A549 (cell line): ENCODE measurements at regions of chr16 and their contacts with region 1.

Region 1: DNA sequence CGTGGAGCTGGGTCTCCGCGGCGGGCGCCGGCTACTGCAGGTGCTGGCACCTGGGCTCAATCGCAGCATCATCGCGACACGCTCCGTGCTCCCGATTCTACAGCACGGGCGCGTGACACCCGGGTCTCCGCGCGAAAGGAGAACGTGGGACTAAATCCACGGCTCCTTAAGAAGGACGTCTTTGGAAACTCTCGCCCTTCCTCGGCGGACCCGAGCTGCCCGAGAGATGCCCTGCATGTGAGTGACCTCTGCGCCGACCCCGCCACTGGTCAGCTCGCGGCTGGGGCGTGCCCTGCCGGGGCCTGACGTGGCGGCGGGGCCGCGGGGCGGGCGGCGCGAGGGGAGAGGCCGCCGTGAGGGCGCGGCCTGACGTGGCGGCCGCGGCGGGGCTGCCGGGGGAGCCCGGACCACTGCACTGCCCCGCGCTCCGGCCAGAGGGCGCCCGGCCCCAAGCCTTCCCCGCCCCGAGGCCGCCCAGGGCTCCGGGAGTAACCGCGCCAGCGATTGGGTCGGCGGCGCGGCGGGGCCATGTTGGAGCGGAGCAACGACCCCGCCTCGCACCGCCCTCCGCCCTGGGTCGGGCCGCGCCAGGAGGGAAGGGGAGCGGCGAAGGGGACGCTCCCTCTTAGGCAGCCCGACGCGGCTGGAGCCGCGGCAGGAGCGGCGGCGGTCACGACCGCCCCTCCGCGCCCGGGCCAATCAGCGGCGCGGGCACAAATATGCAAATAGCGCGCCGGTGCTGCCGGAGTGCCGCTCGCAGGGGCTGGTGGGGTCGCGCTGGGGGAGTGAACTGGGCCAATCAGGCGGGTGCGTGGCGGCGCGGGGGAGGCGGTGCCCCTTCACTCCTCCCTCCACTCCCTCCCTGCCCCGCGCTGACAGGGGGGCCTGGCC is 75.6 kb downstream of the CHD9 start:
- DNase-seq: peak; percentile 94 to 96
- ATAC-seq: peak; percentile 87 to 94
- H3K4me3 ChIP-seq: peak overlapping the region; percentile 96
- H3K27ac ChIP-seq: peak overlapping the region; percentile 94 to 96
- H3K4me1 ChIP-seq: peaks cover 29% of the 10 kb centered on the region
- CTCF ChIP-seq: peak; percentile 83
- EP300 ChIP-seq: no peak
- POLR2A ChIP-seq: peak; percentile 72
- RAD21 ChIP-seq: peak; percentile 57 to 83

Region 2: GRCh38 chr16:53080345-53081031 is 49.9 kb before region 1 on chr16:
- CTCF ChIA-PET with region 1: no interaction called
- POLR2A ChIA-PET with region 1: interaction called, 14 read pairs
- DNase-seq: peak; percentile 89 to 92
- ATAC-seq: peak; percentile 95 to 96
- H3K4me3 ChIP-seq: peak overlapping the region; percentile 3; the same call in 2 of the 3 replicates
- H3K27ac ChIP-seq: peak overlapping the region; percentile 75 to 87
- H3K4me1 ChIP-seq: peaks cover 75% of the 10 kb centered on the region
- CTCF ChIP-seq: no peak
- EP300 ChIP-seq: peak; percentile 58 to 70; a peak in 3 of 5 replicates
- POLR2A ChIP-seq: no peak
- RAD21 ChIP-seq: peak in 1 of 2 experiments; percentile 39; a peak in 3 of 5 replicates

Region 3: DNA sequence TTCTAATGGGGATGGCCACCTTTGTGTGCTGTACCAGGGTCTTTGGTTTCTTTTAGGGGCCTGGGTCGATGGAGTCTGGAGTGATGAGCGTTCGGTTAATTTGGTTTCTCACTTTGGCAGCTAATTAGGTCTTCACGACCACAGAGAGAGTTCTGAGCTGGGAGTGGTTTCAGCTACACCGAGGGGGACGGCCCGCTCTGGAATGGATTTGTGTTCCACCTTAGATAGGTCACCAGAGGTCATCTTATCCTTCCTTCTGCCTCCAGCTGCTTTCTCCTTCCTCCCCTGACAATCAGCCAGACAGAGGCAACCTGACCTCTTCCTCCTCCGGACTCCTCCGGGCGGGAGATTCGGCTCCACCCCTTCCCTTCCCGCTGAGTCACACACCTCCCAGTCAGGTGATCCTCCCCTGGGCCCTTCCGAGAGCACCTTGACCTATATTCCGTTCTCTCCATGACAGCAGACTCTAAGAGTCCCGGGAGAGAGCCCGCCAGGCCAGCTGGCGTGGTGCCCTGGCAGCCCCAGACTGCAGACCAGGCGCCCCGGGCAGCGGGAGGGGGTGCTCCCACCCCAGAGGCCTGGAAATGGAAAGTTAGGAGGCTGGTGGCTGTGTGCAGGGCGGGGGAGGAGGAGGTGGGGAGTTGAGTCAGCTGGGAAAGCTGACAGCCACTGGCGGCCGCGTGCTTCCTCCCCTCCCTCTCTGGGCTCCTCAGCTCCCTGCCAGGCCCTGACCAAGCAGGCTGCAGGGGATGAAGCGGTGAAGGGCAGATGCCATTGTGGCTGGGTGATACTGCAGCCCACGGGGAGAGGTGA is 30.9 kb before region 1 on chr16:
- CTCF ChIA-PET with region 1: interaction called, 7 read pairs
- POLR2A ChIA-PET with region 1: interaction called, 18 read pairs
- DNase-seq: peak; percentile 86 to 95
- ATAC-seq: peak; percentile 92 to 94
- H3K4me3 ChIP-seq: peak overlapping the region; percentile 31
- H3K27ac ChIP-seq: peak overlapping the region; percentile 95 to 96
- H3K4me1 ChIP-seq: peaks cover 49% of the 10 kb centered on the region
- CTCF ChIP-seq: no peak
- EP300 ChIP-seq: peak; percentile 46 to 65; a peak in 2 of 5 replicates
- POLR2A ChIP-seq: no peak
- RAD21 ChIP-seq: peak in 1 of 2 experiments; percentile 45; a peak in 2 of 5 replicates